Thyroid gland (tissue), 4 donors: ENCODE measurements at regions of chr11 and their contacts with region 1.

Region 1: DNA sequence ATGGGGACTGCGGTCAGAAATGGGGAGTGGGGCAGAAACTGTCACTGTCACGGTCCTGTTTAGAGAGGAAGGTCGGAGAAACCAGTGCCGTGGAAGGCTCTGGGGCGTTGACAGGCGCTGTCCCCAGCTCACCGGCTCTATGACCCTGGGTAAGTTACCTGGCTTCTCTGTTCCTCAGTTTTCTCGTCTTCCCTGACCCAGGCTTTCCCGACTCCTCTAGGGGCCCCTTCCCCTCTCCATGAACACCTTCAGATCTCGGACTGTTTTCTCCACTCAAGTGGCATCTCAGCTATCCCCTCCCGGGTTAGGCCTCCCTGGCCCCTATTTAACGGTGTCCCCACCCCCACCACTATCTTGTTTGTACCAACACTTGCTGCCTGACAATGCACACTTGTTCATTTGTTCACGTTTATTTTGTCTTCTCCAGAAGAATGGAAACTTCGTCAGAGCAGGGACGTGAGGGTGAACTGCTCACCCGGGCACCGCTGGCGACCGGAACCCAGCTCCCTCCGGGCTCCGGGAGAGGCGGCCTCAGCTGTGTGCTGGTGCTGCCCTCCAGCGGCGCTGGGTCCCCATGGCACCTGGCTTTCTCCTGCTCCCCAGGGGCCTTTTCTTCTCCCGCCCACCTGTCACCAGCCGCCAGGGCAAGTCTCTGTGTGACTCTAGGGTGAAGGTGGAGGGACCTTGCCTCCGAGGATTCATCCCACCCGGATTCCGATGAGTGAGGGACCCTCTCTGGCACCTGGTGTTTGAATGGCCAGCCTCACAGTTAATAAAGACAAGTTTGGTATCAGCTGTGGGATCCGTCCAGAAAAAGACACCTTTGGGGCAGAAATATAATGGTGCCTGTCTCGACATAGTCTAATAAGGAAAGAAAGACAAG is 33.1 kb upstream of the SLC35C1 start:
- DNase-seq: peak; percentile 88 to 89
- H3K4me3 ChIP-seq: peak overlapping the region; percentile 30 to 43 (median 36)
- H3K27ac ChIP-seq: peak overlapping the region in 2 of 3 donors; percentile 42 to 61
- H3K4me1 ChIP-seq: peaks cover 0 to 14% of the 10 kb centered on the region in 2 donors
- H3K27me3 ChIP-seq: no peaks in the 10 kb centered on the region
- CTCF ChIP-seq: peak; percentile 74 to 97 (median 91)
- POLR2A ChIP-seq: no peak

Region 2: DNA sequence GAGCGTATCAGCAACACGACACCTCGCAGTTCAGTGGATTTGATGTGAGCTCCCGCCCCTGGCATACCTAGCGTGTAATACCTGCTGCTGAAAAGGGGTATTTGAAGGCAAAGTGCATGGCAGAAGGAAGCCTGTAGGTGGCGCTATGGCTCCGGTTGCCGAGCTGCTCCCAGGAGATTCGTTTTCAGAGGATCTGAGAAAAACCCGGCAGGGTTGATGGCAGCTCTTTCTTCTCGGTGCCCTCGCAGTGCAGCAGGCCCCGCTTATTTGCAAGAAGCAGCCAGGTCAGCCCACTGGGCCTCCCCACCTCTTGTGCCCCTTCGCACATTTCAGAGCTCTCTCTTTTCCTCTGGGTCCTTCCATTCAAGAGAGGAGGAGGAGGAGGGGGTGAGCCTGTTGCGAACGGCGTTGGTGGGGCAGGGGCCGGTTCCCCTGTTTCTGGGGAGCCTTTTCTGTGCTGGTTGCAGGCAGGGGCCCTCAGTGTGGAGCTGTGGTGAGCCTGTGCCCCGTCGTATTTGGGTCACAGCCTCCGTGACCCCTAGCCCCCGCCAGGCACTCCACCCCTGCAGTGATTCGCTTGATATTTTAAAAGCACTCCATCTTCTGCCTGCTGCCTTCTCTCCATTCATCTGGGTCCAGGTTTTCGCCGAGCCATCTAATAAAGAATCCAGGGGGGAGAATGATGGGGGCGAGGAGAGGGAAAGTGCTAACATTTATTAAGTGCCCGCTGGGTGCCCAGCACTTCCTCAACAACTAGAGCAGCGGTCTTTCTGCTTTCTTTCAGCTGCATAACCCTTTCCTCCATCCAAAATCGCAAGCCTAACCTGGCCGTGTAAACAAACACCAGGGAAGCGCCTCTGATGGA is 400.3 kb before region 1 on chr11:
- intact Hi-C with region 1: loop called (anchors 10 kb)
- DNase-seq: peak; percentile 77 to 79
- H3K4me3 ChIP-seq: no peak overlapping the region
- H3K27ac ChIP-seq: no peak overlapping the region
- H3K4me1 ChIP-seq: peaks cover 0 to 7% of the 10 kb centered on the region in 2 donors
- H3K27me3 ChIP-seq: no peaks in the 10 kb centered on the region
- CTCF ChIP-seq: peak; percentile 74 to 98 (median 88)
- POLR2A ChIP-seq: no peak

Region 3: DNA sequence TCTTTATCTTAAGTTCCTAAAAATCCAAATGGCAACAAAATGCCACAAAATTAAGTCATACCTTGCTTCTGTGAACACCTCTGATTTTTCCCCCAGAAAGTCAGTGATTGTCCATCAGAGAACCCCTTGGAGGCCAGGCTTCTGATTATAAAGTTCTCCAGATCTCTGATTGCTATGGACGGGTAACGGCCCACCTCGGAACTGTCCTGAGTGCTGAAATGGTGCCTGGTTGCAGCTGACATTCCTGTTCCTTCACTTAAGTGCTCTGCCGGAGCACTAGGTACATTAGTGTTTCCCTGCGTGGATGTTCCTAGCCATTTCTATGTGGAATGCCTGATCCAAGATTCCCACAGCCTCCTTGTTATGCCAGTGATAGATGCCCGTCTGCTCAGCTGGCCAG is 191.4 kb before region 1 on chr11:
- intact Hi-C with region 1: no loop called
- DNase-seq: peak; percentile 30 to 60
- H3K4me3 ChIP-seq: no peak overlapping the region
- H3K27ac ChIP-seq: no peak overlapping the region
- H3K4me1 ChIP-seq: no peaks in the 10 kb centered on the region
- H3K27me3 ChIP-seq: no peaks in the 10 kb centered on the region
- CTCF ChIP-seq: no peak
- POLR2A ChIP-seq: no peak

Region 4: DNA sequence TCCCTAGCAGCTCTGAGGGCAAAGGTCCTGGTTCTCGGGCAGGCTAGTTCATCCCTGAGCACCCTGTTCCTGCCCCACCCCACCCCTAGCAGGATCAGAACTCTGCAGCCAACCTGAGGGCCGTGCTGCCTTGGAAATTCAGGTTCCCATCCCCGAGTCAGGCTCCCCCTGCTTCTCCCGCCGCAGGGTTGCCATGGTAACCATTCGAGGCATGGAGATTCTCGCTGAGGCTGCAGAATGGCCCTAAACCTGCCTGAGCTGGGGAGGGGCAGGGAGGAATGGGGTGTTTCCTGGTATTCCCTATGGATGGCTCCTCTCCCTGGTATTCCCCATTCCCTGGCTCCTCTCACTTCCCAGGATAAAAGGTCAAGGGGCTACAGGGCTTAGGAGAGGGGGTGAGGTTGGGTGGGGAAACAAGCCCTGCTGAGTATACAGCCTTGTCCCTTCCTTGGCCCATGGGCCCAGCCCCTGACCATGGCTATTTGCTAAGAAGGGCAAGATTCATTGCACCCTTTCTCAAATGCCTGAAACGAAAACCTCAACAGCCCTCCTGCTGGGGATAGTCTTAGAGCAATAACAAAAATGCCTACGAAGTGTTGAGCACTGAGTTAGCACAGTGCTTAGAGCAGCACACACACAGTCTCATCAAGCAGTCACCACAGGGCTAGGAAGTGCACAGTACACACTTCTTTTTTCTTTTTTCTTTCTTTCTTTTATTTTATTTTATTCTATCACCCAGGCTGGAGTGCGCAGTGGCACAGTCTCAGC is 165.1 kb before region 1 on chr11:
- intact Hi-C with region 1: no loop called
- DNase-seq: peak in 1 of 2 donors; percentile 19
- H3K4me3 ChIP-seq: no peak overlapping the region
- H3K27ac ChIP-seq: no peak overlapping the region
- H3K4me1 ChIP-seq: peaks cover 24 to 34% of the 10 kb centered on the region in 2 donors
- H3K27me3 ChIP-seq: no peaks in the 10 kb centered on the region
- CTCF ChIP-seq: no peak
- POLR2A ChIP-seq: no peak